PC-9 (cell line): ENCODE measurements at regions of chr20 and their contacts with region 1.

Region 1: GRCh38 chr20:50790651-50791277 is 4.1 kb upstream of the BCAS4 start:
- DNase-seq: peak; percentile 86 to 97
- H3K4me3 ChIP-seq: peak overlapping the region; percentile 30; the same call in 1 of the 2 replicates
- H3K27ac ChIP-seq: peak overlapping the region; percentile 61
- H3K4me1 ChIP-seq: peaks cover 18% of the 10 kb centered on the region
- H3K27me3 ChIP-seq: no peaks in the 10 kb centered on the region
- CTCF ChIP-seq: peak; percentile 73

Region 2: DNA sequence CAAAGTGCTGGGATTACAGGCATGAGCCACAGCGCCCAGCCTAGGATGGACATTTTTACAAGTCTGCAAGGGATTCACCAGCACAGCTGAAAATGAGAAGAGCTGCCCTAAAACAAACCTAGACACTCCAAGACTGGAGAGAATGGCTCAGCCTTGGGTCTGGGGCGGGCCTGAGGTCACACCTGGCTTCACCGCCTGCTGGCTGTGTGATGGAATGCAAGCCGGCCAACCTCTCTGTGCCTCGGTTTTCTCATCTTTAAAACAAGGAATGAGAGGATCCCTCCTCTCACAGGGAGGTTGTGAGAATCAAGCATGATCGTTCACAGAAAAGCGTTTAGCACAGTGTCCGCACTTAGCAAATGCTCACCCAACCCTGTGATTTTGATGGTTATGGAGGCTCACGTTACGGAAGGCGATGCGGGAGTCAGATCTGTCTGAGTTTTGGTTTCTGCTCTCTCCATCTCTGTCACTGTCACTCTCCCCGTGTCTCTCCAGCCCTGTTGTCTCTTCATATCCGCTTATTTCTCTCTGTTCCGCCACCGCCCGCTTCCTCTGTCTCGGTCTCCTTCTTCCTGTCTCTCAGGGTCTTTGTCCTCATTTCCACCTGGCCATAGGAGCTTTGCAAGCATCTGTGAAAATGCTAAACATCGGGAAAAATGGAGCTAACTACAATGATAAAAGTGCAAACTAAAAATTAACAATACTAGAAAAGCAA is 552.5 kb before region 1 on chr20:
- CTCF ChIA-PET with region 1: interaction called, 13 read pairs
- POLR2A ChIA-PET with region 1: no interaction called
- intact Hi-C with region 1: no loop called
- DNase-seq: no peak
- H3K4me3 ChIP-seq: no peak overlapping the region
- H3K27ac ChIP-seq: peak overlapping the region; percentile 67
- H3K4me1 ChIP-seq: peaks cover 83% of the 10 kb centered on the region
- H3K27me3 ChIP-seq: no peaks in the 10 kb centered on the region
- CTCF ChIP-seq: no peak

Region 3: DNA sequence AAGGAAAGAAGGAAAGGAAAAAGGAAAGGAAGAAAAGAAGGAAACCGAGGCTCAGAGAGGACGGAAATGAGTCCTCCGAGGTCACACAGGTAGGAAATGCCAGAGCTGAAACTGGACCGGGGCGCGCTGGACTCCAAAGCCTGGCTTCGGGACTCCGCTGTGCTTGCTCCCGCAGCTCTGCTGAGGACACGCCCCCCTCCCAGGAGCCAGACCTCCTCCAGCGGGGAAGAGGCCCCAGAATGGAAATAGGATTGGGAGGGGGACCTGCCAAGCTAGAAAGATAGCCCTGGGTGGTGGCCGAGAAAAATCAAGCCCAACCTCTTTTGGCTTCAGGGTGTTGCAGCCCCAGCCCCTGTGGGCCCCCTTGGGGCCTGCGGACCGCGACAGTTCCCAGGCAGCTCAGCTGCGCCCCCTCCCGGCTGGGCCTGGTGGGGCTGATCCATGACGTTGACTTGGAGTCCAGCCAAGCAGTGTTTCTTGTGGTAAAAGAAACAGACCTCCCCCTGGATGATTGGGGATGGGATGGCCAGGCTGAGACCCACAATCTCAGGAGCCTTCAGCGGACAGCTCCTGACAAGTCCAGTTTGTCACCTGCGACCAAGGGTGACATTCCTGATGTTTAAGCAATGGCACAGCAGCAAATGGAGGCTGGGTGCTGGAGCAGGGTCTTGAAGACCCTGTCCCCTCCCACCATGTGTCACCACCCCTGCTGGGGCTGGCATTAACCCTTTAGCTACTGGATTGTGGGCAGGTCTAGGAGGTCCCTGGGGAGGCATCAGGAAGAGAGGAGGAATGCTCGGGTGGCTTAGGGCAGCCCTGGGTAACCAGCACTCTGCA is 154.9 kb before region 1 on chr20:
- CTCF ChIA-PET with region 1: no interaction called
- POLR2A ChIA-PET with region 1: no interaction called
- intact Hi-C with region 1: loop called (anchors 5 kb)
- DNase-seq: peak; percentile 74 to 92
- H3K4me3 ChIP-seq: peak overlapping the region; percentile 42; the same call in 1 of the 2 replicates
- H3K27ac ChIP-seq: no peak overlapping the region
- H3K4me1 ChIP-seq: peaks cover 36% of the 10 kb centered on the region
- H3K27me3 ChIP-seq: no peaks in the 10 kb centered on the region
- CTCF ChIP-seq: peak; percentile 99

Region 4: DNA sequence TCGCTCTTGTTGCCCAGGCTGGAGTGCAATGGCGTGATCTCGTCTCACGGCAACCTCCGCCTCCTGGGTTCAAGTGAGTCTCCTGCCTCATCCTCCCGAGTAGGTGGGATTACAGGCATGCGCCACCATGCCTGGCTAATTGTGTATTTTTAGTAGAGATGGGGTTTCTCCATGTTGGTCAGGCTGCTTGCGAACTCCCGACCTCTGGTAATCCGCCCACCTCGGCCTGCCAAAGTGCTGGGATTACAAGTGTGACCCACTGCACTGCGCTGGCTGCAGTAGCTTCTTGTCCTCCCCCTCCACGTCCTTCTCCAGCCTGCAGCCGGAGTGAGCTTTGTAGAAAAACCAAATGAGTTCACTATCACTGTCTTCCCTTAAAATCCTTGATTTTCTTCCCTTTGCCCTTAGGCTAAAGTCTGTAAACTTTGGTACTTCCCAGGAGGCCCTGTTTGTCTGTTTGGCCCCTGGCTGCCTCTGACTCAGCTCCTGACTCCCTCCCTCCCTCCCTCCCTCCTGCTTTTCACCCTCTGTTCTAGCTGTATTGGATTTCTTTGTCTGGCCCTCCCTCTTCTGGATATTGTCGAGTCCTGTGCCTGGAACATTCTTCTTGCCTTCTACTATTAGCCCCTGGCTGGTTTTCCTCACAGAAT is 46.5 kb before region 1 on chr20:
- CTCF ChIA-PET with region 1: interaction called, 10 read pairs
- POLR2A ChIA-PET with region 1: interaction called, 8 read pairs
- intact Hi-C with region 1: loop called (anchors 1 kb)
- DNase-seq: peak; percentile 72 to 83
- H3K4me3 ChIP-seq: no peak overlapping the region
- H3K27ac ChIP-seq: peak overlapping the region; percentile 76
- H3K4me1 ChIP-seq: peaks cover 94% of the 10 kb centered on the region
- H3K27me3 ChIP-seq: no peaks in the 10 kb centered on the region
- CTCF ChIP-seq: peak; percentile 68

Region 5: DNA sequence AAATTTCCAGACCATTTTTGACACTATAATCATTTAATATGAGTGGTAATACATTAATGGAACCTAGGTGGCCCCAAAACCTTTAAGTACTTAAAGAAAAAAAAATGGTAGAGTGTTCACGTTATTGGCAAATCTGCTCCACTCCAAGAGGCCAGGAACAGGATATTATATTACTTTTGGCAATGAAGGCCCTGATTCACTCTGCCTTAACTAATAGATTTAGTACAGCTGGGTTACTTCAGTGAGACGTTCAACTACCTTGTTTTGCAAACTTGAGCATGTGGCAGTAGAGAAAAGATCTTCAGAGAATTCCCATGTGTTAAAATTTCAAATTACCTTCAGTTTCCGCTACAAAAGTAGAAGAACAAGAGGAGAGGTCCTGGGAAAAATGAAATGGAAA is 127.6 kb after region 1 on chr20:
- CTCF ChIA-PET with region 1: interaction called, 18 read pairs
- POLR2A ChIA-PET with region 1: no interaction called
- intact Hi-C with region 1: no loop called
- DNase-seq: no peak
- H3K4me3 ChIP-seq: no peak overlapping the region
- H3K27ac ChIP-seq: no peak overlapping the region
- H3K4me1 ChIP-seq: no peaks in the 10 kb centered on the region
- H3K27me3 ChIP-seq: no peaks in the 10 kb centered on the region
- CTCF ChIP-seq: no peak

Region 6: GRCh38 chr20:50987592-50988210 is 196.9 kb after region 1 on chr20:
- CTCF ChIA-PET with region 1: interaction called, 13 read pairs
- POLR2A ChIA-PET with region 1: no interaction called
- intact Hi-C with region 1: loop called (anchors 10 kb)
- DNase-seq: peak; percentile 73
- H3K4me3 ChIP-seq: no peak overlapping the region
- H3K27ac ChIP-seq: no peak overlapping the region
- H3K4me1 ChIP-seq: no peaks in the 10 kb centered on the region
- H3K27me3 ChIP-seq: 0 out of 2 replicates have a peak, but pooled peaks cover 7% of the 10 kb centered on the region
- CTCF ChIP-seq: peak; percentile 98

Region 7: GRCh38 chr20:51014797-51015722 is 224.3 kb after region 1 on chr20:
- CTCF ChIA-PET with region 1: no interaction called
- POLR2A ChIA-PET with region 1: no interaction called
- intact Hi-C with region 1: no loop called
- DNase-seq: peak in 1 of 2 experiments; percentile 45
- H3K4me3 ChIP-seq: no peak overlapping the region
- H3K27ac ChIP-seq: no peak overlapping the region
- H3K4me1 ChIP-seq: no peaks in the 10 kb centered on the region
- H3K27me3 ChIP-seq: peaks cover 67% of the 10 kb centered on the region
- CTCF ChIP-seq: peak; percentile 89